K562 (cell line): ENCODE measurements at regions of chr17 and their contacts with region 1.

Region 1: DNA sequence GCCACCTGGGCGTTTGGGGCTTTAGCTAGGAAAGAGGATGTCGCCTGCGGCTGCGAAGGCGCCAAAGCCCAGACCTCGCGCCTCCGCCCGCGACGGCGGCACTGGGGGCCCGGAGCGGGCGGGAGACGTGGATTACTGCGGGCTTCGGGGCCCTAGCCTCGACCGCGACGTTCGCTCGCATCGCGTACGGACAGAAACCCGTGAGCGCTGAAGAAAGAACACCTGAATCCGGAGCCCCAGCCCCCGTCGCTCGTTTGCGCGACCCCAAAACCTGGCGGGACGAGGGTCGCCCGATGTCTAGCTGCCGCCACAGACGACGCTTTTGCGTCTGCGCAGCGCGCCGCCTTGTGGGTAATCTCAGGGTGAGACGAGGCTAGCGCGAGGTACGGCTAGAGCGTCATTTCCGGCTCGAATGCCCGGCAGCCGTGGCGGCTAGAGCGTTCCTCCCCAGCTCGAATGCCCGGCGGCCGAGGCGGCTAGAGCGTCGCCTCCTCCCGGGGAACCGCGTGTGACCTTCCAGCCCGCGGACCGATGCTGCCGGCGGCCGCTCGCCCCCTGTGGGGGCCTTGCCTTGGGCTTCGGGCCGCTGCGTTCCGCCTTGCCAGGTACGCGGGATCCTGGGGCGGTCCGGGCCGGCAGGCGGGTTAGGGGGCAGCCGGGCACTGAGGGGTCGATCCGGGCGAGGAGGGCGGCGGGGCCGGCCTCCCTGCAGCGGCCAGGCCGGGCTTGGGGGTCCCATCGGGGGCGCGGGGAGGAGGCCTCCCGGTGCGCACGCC is at the start of gene MRPL12:
- DNase-seq: peak; percentile 83 to 97 (median 90)
- ATAC-seq: peak; percentile 90
- H3K4me3 ChIP-seq: peak within 1 kb of the TSS; percentile 99
- H3K27ac ChIP-seq: peak within 1 kb of the TSS; percentile 90
- H3K4me1 ChIP-seq: peaks cover 14 to 63% of the 10 kb centered on the region in 2 experiments; a peak in 4 of 5 replicates
- H3K27me3 ChIP-seq: no peaks in the 10 kb centered on the region
- CTCF ChIP-seq: peak in 1 of 3 experiments; percentile 14; a peak in 1 of 6 replicates
- EP300 ChIP-seq: peak; percentile 21; the same call in 1 of the 2 replicates
- POLR2A ChIP-seq: peak; percentile 93
- RAD21 ChIP-seq: no peak
- polyA plus RNA-seq, gene MRPL12: 0.94 to 2.7 TPM

Region 2: DNA sequence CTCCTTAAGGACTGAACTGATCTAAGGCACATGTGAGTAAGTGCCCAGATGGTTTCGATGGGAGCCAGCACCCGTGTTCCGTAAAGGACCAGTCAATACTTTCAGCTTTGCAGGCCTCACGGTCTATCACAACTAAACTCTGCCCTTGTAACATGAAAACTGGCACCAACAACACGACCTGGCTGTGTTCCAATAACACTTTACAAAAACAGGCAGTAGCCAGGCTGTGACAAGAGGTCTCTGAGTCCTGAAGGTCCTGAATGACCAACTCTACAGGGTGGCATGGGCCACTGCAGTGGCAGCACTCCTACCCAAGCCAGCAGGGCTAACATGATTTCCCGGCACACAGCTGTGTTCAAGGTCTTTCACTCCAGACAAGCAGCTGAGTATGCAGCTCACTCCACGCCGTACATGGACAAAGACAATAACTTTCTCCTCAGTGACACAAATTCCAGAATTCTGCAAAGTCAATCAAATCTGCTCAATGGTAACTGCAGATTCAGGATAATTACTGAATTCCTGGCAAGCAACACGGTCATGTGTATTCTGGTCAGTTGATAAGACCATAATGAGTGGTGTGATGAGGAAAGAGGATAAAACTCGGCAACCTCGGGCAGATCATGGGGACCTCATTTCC is 81.5 kb before region 1 on chr17:
- CTCF ChIA-PET with region 1: no interaction called
- POLR2A ChIA-PET with region 1: no interaction called
- in situ Hi-C with region 1: no loop called
- intact Hi-C with region 1: no loop called
- DNase-seq: no peak
- ATAC-seq: no peak
- H3K4me3 ChIP-seq: no peak overlapping the region
- H3K27ac ChIP-seq: no peak overlapping the region
- H3K4me1 ChIP-seq: no peaks in the 10 kb centered on the region
- H3K27me3 ChIP-seq: no peaks in the 10 kb centered on the region
- CTCF ChIP-seq: no peak
- EP300 ChIP-seq: no peak
- POLR2A ChIP-seq: no peak
- RAD21 ChIP-seq: no peak

Region 3: DNA sequence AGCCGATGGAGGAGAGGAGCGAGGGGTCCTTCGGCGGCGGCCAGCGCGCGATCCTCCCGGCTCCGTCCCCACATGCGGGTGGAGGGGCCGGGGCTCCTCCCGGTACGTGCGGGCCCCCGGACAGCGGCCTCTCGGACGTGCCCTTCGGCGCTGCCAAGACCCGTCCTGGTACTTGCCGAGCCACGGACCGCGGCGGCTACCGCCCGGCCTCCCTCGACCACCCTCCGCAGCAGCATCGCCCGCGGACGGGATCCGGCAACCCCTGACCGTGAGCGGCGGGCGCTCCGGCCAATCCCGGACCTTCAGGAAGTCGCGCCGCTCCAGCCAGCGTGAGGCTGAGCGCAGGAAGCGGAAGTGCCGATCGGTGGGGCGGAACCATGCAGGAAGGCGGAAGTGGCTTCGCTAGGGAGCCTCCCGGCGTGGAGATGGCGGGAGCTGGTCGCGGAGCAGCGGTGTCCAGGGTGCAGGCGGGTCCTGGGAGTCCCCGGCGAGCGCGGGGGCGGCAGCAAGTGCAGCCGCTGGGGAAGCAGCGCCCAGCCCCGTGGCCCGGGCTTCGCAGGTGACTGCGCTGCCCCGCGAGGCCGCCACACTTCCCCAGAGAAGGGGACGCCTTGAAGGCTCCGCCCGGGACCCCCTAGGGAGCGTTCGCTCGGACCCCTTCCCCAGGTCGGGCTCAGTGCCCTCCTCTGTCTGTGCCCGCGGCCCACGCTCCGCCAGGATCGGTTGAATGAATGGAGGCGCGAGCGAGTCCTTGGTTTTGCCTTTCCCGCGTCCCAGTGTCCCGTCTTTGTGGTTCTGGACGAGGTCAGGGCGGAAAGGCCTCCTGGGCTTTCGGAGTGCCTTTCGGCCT is 36.6 kb before region 1 on chr17 and contains the starts of genes CCDC137 and OXLD1:
- CTCF ChIA-PET with region 1: no interaction called
- POLR2A ChIA-PET with region 1: interaction called, 6 read pairs
- in situ Hi-C with region 1: no loop called
- intact Hi-C with region 1: loop called (anchors 5 kb)
- DNase-seq: peak; percentile 95 to 98 (median 97)
- ATAC-seq: peak; percentile 94
- H3K4me3 ChIP-seq: peak within 1 kb of the TSS; percentile 87
- H3K27ac ChIP-seq: peak within 1 kb of the TSS; percentile 98
- H3K4me1 ChIP-seq: peaks cover 36 to 77% of the 10 kb centered on the region in 2 experiments
- H3K27me3 ChIP-seq: no peaks in the 10 kb centered on the region
- CTCF ChIP-seq: no peak
- EP300 ChIP-seq: no peak
- POLR2A ChIP-seq: peak; percentile 95
- RAD21 ChIP-seq: no peak
- polyA plus RNA-seq, gene CCDC137: 2.3 to 4.1 TPM
- polyA plus RNA-seq, gene OXLD1: 4.4 to 7.9 TPM

Region 4: GRCh38 chr17:81683584-81684237 is 19.4 kb before region 1 on chr17 and contains the starts of genes ARL16 and HGS:
- CTCF ChIA-PET with region 1: no interaction called
- POLR2A ChIA-PET with region 1: interaction called, 39 read pairs
- in situ Hi-C with region 1: no loop called
- intact Hi-C with region 1: no loop called
- DNase-seq: peak; percentile 96 to 100 (median 98)
- ATAC-seq: peak; percentile 99
- H3K4me3 ChIP-seq: peak within 1 kb of the TSS; percentile 96
- H3K27ac ChIP-seq: peak within 1 kb of the TSS; percentile 95
- H3K4me1 ChIP-seq: peaks cover 13 to 60% of the 10 kb centered on the region in 2 experiments
- H3K27me3 ChIP-seq: no peaks in the 10 kb centered on the region
- CTCF ChIP-seq: no peak
- EP300 ChIP-seq: no peak
- POLR2A ChIP-seq: peak; percentile 59
- RAD21 ChIP-seq: no peak
- polyA plus RNA-seq, gene ARL16: 5.4 to 10.4 TPM
- polyA plus RNA-seq, gene HGS: 3.9 to 9.4 TPM

Region 5: DNA sequence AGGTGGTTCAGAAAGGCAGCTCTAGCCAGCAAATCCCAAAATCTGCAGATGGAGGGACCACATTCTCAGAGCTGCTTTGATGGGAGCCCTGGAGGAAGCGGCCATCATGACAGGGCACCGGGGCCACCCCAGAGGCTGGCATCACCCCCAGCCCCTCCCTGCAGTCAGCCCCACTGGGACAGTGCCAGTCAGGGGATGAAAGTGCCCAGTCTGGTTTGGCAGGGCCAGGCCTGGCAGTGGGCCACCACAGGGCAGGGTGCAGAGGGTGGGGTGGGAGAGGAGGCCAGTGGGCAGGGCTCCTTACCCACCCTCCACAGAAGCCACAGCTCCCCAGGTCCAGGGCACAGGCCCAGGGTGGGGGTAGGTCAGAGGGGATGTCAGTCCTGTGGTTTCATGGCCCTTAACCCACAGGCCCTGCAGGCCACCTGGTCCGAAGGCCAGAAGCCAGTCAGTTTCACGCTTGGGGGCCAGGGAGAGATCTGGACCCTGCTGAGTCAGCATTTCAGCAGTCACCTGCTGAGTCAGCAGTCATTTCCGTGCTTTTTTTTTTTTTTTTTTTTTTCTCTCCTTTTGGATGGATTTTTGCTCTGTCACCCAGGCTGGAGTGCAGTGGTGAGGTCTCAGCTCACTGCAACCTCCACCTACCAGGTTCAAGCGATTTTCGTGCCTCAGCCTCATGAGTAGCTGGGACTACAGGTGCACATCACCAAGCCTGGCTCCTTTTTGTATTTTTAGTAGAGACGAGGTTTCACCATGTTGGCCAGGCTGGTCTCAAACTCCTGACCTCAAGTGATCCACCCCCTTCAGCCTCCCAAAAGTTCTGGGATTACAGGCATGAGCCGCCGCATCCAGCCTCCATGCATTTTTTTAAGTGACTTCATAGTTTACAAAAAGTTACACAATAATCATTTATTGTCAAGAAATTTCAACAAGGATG is 19.3 kb after region 1 on chr17:
- CTCF ChIA-PET with region 1: no interaction called
- POLR2A ChIA-PET with region 1: interaction called, 10 read pairs
- in situ Hi-C with region 1: no loop called
- intact Hi-C with region 1: no loop called
- DNase-seq: peak; percentile 70 to 80 (median 74)
- ATAC-seq: peak; percentile 77
- H3K4me3 ChIP-seq: no peak overlapping the region
- H3K27ac ChIP-seq: peak overlapping the region; percentile 54; the same call in 2 of the 3 replicates
- H3K4me1 ChIP-seq: peaks cover 19 to 53% of the 10 kb centered on the region in 2 experiments
- H3K27me3 ChIP-seq: no peaks in the 10 kb centered on the region
- CTCF ChIP-seq: no peak
- EP300 ChIP-seq: no peak
- POLR2A ChIP-seq: peak; percentile 66
- RAD21 ChIP-seq: no peak

Region 6: GRCh38 chr17:81840826-81841778 is 137.9 kb after region 1 on chr17:
- CTCF ChIA-PET with region 1: no interaction called
- POLR2A ChIA-PET with region 1: no interaction called
- in situ Hi-C with region 1: no loop called
- intact Hi-C with region 1: no loop called
- DNase-seq: no peak
- ATAC-seq: no peak
- H3K4me3 ChIP-seq: no peak overlapping the region
- H3K27ac ChIP-seq: no peak overlapping the region
- H3K4me1 ChIP-seq: peaks cover 4 to 50% of the 10 kb centered on the region in 2 experiments; a peak in 4 of 5 replicates
- H3K27me3 ChIP-seq: no peaks in the 10 kb centered on the region
- CTCF ChIP-seq: no peak
- EP300 ChIP-seq: no peak
- POLR2A ChIP-seq: no peak
- RAD21 ChIP-seq: no peak